ENCODE measurements at regions of chr2 and their contacts with region 1.

Region 1: GRCh38 chr2:152962446-152962845 is 244.0 kb downstream of the ARL6IP6 start:
- DNase-seq: no peak
- H3K4me3 ChIP-seq: no peak overlapping the region
- H3K27ac ChIP-seq: no peak overlapping the region
- H3K4me1 ChIP-seq: no peaks in the 10 kb centered on the region
- H3K27me3 ChIP-seq: no peaks in the 10 kb centered on the region
- CTCF ChIP-seq: no peak

Region 2: DNA sequence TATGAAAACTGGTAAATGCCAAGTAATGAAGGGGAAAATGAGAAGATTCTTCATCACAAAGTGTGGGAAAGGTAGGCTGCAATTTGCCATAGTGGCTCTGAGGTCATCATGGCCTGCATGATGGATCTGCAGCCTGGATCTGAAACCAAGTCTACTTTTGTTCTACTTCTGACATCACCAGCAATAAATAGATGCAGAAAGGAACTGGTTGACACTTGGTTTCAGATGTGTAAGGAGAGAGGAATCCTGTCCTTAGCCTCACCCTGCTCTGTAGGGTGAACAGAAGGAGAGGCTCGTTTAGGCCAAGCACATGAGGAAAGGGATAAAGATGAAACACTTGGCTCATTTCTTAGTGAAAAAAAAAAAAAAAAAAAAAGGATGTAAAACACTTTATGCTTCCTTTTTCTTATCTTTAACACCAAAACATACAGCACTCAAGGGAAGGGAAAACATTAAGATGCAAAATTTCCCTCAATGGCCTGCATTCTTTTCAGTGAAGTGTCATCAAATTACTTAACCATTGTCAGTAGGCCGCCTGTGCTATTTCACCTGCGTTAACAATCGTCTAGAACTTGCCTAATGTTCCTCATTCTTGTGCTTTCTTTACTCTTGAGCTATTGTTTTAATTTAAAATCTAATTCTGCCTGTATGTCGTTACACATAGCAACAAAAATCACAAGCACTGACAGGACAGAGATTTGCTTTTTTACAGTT is 1232.0 kb before region 1 on chr2:
- intact Hi-C with region 1: loop called (anchors 5 kb)
- DNase-seq: no peak
- H3K4me3 ChIP-seq: no peak overlapping the region
- H3K27ac ChIP-seq: no peak overlapping the region
- H3K4me1 ChIP-seq: no peaks in the 10 kb centered on the region
- H3K27me3 ChIP-seq: no peaks in the 10 kb centered on the region
- CTCF ChIP-seq: no peak

Region 3: DNA sequence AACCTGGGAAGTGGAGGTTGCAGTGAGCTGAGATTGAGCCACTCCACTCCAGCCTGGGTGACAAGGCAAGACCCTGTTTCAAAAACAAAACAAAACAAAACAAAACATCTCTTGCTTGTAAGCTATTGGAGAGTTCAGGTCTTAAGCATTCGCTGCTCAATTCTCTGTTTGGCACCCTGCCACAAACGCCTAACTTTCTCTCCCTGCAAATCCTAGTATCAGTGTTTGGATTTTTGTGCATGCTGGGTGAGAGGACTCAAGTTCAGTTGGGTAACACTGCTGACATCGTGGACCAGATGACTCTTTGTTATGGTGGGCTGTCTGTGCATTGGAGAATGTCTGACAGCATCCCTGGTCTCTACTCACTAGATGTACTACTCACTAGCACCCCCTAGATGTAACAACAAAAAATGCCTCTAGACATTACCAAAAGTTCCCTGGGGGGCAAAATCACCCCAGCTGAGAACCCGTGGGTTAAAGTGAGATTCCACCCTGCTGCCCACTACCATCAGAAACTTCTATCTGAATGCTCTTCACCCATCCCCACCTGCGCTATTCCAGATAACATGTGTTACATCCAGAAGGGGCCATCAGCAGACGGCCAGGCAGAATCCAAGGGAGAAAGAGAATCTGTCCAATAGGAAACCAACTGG is 914.5 kb before region 1 on chr2:
- intact Hi-C with region 1: no loop called
- DNase-seq: no peak
- H3K4me3 ChIP-seq: no peak overlapping the region
- H3K27ac ChIP-seq: no peak overlapping the region
- H3K4me1 ChIP-seq: no peaks in the 10 kb centered on the region
- H3K27me3 ChIP-seq: no peaks in the 10 kb centered on the region
- CTCF ChIP-seq: no peak

Region 4: GRCh38 chr2:152730591-152731303 is 231.7 kb before region 1 on chr2:
- intact Hi-C with region 1: no loop called
- DNase-seq: no peak
- H3K4me3 ChIP-seq: no peak overlapping the region
- H3K27ac ChIP-seq: no peak overlapping the region
- H3K4me1 ChIP-seq: peaks cover 0 to 4% (median 0%) of the 10 kb centered on the region in 4 donors
- H3K27me3 ChIP-seq: no peaks in the 10 kb centered on the region
- CTCF ChIP-seq: no peak

Region 5: DNA sequence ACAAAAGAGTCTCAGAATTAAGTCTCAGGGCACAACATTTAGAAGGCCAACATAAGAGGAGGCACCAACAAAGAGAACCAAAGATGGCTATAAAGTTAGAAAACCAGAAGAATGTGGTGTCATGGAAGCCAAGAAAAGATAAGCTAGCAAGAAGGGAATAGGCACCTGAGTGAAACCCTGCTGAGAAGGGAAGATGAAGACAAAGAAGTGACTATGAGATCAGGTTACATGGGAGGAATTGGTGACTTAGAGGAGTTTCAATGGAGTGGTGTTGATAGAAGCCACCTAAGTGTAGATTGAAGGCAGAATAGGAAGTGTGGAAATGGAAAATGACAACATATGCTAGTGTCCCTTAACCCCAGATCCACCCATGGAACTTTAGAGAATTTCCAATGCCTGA is 1408.4 kb after region 1 on chr2:
- intact Hi-C with region 1: no loop called
- DNase-seq: no peak
- H3K4me3 ChIP-seq: no peak overlapping the region
- H3K27ac ChIP-seq: no peak overlapping the region
- H3K4me1 ChIP-seq: peaks cover 0 to 10% (median 0%) of the 10 kb centered on the region in 4 donors
- H3K27me3 ChIP-seq: no peaks in the 10 kb centered on the region
- CTCF ChIP-seq: no peak

Measured in tibial artery (tissue), 4 donors.